Activated CD4-positive, alpha-beta memory T cell treated with anti-CD3 and anti-CD28 coated beads for 36 hours (primary cell): ENCODE measurements at regions of chr1 and their contacts with region 1.

Region 1: GRCh38 chr1:212994926-212995325 is 20.7 kb downstream of the ANGEL2 start:
- DNase-seq: no peak
- H3K4me3 Mint-ChIP-seq: no peak overlapping the region
- H3K27ac Mint-ChIP-seq: no peak overlapping the region
- H3K4me1 Mint-ChIP-seq: peaks cover 10% of the 10 kb centered on the region
- H3K27me3 Mint-ChIP-seq: no peaks in the 10 kb centered on the region

Region 2: GRCh38 chr1:212791676-212792395 is 203.1 kb before region 1 on chr1 and contains the starts of genes NSL1 and TATDN3:
- CTCF ChIA-PET with region 1: interaction called, 6 read pairs
- POLR2A ChIA-PET with region 1: no interaction called
- intact Hi-C with region 1: loop called (anchors 5 kb)
- DNase-seq: peak; percentile 97
- H3K4me3 Mint-ChIP-seq: peak within 1 kb of the TSS; percentile 95
- H3K27ac Mint-ChIP-seq: peak within 1 kb of the TSS; percentile 82
- H3K4me1 Mint-ChIP-seq: peaks cover 32% of the 10 kb centered on the region
- H3K27me3 Mint-ChIP-seq: no peaks in the 10 kb centered on the region
- total RNA-seq, gene NSL1: 39.8 to 41.8 TPM
- total RNA-seq, gene TATDN3: 19.2 to 20.7 TPM

Region 3: GRCh38 chr1:212814537-212815334 is 180.2 kb before region 1 on chr1:
- CTCF ChIA-PET with region 1: interaction called, 37 read pairs
- POLR2A ChIA-PET with region 1: no interaction called
- intact Hi-C with region 1: loop called (anchors 1 kb)
- DNase-seq: no peak
- H3K4me3 Mint-ChIP-seq: no peak overlapping the region
- H3K27ac Mint-ChIP-seq: no peak overlapping the region
- H3K4me1 Mint-ChIP-seq: no peaks in the 10 kb centered on the region
- H3K27me3 Mint-ChIP-seq: no peaks in the 10 kb centered on the region

Region 4: GRCh38 chr1:212967801-212968200 is 27.1 kb before region 1 on chr1:
- CTCF ChIA-PET with region 1: interaction called, 12 read pairs
- POLR2A ChIA-PET with region 1: no interaction called
- intact Hi-C with region 1: no loop called
- DNase-seq: no peak
- H3K4me3 Mint-ChIP-seq: no peak overlapping the region
- H3K27ac Mint-ChIP-seq: no peak overlapping the region
- H3K4me1 Mint-ChIP-seq: peaks cover 4% of the 10 kb centered on the region
- H3K27me3 Mint-ChIP-seq: peaks cover 17% of the 10 kb centered on the region

Region 5: DNA sequence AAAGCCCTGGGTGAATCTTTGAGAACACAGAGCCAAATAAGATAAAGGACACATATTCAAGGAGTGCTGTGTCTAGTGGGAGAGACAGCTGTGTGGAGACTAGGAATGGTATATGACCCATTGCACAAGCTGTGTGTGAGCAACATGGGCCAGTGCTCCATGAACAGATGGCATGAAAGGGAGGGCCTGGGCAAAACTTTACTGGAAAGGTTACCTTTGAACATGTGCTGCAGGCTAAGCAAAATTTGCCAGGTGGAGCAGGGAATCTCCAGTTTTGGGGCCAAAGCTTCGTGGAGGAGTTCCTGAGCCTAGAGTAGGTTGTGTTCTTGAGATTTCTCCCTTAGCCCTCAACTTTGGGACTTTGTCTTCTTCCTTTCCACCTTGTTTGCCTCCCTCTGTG is 546.7 kb after region 1 on chr1:
- CTCF ChIA-PET with region 1: no interaction called
- POLR2A ChIA-PET with region 1: no interaction called
- intact Hi-C with region 1: no loop called
- DNase-seq: no peak
- H3K4me3 Mint-ChIP-seq: no peak overlapping the region
- H3K27ac Mint-ChIP-seq: no peak overlapping the region
- H3K4me1 Mint-ChIP-seq: no peaks in the 10 kb centered on the region
- H3K27me3 Mint-ChIP-seq: no peaks in the 10 kb centered on the region